Breast epithelium (tissue), 4 donors: ENCODE measurements at regions of chr15 and their contacts with region 1.

Region 1: DNA sequence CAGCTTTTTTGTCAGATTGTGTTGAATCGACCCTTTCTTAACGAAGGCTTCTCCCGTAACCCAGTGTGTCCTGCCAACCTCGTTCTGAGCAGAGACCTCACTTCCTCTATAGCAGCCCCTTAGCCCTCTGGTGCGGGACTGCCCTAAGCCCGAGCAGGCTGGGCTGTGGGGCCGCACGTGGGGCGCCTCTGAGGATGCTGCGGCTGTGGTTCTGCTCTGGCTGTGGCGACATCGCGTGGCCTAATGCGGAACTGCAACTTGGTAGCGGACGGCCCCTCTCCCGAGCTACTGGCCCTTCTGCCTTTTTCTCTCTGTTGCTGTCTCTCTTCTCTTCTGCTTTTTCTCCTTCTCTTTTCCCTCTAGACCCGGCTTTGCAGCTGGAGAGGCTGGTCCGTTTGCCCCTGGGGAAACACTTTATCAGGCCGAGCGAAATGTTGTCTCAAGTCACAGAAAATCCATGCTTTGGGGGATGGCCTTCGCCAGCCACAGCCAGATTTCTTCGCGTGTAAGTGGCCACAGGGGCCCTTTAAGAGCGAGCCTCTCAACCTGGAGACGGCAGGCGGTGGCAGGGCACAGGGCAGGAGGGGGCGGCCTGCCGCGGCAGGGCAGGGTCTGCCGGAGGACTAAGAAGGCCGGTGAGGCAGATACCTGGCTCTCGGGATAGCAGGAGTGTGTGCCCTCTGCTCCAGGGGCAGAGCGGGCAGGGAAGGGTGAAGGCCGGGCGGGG is 19.4 kb upstream of the KIF23 start:
- DNase-seq: peak; percentile 56 to 82
- H3K4me3 ChIP-seq: peak overlapping the region in 1 of 3 donors; percentile 39
- H3K27ac ChIP-seq: no peak overlapping the region
- H3K4me1 ChIP-seq: peaks cover 0 to 4% of the 10 kb centered on the region in 2 donors
- H3K27me3 ChIP-seq: no peaks in the 10 kb centered on the region
- CTCF ChIP-seq: peak; percentile 81 to 92 (median 87)
- POLR2A ChIP-seq: no peak

Region 2: DNA sequence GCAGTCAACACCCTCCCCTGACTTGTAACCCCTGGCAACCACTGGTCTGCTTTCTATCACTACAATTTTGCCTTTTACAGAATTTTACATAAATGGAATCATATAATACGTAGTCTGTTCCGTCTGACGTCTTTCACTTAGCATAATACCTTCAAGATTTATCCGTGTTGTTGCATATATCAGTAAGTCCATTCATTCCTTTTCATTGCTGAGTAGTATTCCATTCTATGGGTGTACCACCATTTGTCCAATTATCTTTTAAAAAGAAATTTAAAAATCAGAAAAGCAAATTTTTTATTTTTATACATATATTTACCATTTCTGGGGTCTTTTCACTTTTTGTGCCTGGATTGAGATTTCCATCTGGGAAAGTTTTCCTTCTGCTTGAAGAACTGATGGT is 344.7 kb before region 1 on chr15:
- intact Hi-C with region 1: loop called (anchors 5 kb)
- DNase-seq: no peak
- H3K4me3 ChIP-seq: no peak overlapping the region
- H3K27ac ChIP-seq: no peak overlapping the region
- H3K4me1 ChIP-seq: no peaks in the 10 kb centered on the region
- H3K27me3 ChIP-seq: no peaks in the 10 kb centered on the region
- CTCF ChIP-seq: no peak
- POLR2A ChIP-seq: no peak

Region 3: GRCh38 chr15:69380100-69380727 is 14.5 kb before region 1 on chr15:
- intact Hi-C with region 1: loop called (anchors 1 kb)
- DNase-seq: no peak
- H3K4me3 ChIP-seq: no peak overlapping the region
- H3K27ac ChIP-seq: no peak overlapping the region
- H3K4me1 ChIP-seq: no peaks in the 10 kb centered on the region
- H3K27me3 ChIP-seq: no peaks in the 10 kb centered on the region
- CTCF ChIP-seq: no peak
- POLR2A ChIP-seq: no peak